ENCODE measurements at regions of chr15 and their contacts with region 1.

Region 1: DNA sequence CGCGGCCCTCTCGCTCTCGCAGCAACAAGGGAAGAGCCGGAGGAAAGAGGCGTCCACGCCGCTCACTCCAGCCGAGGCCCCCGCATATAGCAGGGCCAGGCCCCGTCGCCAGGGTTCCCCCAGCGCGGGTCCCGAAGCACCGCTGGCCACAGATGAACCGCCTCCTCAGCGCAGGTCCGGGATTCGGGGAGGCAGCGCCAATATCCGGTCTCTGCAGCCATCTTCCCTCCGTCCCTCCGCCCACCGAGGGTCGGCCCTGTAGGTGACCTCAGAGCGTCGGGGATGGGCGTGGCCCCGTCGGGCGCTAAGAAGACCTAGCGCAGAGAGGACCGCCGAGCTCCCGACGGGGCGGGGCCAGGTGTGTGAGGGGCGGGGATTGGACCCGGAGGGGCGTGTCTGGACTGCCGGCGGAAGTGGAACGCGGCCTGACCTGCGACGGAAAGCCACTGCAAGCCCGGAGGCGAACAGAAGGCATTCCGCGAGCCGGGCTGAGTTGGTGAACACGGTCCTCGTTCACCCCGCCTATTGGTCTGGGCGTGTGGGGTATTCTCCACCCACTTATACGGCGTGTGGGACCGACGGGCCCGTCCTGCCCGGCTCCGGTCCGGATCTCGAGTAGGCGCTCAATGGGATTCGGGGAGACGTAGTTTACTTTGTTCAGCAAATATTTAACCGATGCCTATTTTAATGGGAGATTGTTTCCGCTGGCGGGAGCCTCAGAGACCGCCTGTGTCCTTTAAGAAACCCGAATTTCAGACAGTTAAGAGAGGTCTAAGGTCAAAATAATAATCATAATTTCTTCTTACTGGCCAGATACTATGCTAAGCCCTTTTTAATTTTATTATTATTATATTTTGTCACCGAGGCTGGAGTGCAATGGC is 26.9 kb upstream of the MTHFS start:
- DNase-seq: peak; percentile 99
- ATAC-seq: peak; percentile 92
- H3K4me3 Mint-ChIP-seq: peak overlapping the region; percentile 93
- H3K27ac Mint-ChIP-seq: peak overlapping the region; percentile 99
- H3K4me1 Mint-ChIP-seq: peaks cover 23% of the 10 kb centered on the region
- H3K27me3 Mint-ChIP-seq: no peaks in the 10 kb centered on the region; the same call in 1 of the 2 replicates
- CTCF ChIP-seq: no peak

Region 2: GRCh38 chr15:79582650-79583049 is 341.1 kb before region 1 on chr15:
- CTCF ChIA-PET with region 1: no interaction called
- POLR2A ChIA-PET with region 1: no interaction called
- DNase-seq: no peak
- ATAC-seq: no peak
- H3K4me3 Mint-ChIP-seq: no peak overlapping the region
- H3K27ac Mint-ChIP-seq: no peak overlapping the region
- H3K4me1 Mint-ChIP-seq: no peaks in the 10 kb centered on the region
- H3K27me3 Mint-ChIP-seq: no peaks in the 10 kb centered on the region
- CTCF ChIP-seq: no peak

Region 3: DNA sequence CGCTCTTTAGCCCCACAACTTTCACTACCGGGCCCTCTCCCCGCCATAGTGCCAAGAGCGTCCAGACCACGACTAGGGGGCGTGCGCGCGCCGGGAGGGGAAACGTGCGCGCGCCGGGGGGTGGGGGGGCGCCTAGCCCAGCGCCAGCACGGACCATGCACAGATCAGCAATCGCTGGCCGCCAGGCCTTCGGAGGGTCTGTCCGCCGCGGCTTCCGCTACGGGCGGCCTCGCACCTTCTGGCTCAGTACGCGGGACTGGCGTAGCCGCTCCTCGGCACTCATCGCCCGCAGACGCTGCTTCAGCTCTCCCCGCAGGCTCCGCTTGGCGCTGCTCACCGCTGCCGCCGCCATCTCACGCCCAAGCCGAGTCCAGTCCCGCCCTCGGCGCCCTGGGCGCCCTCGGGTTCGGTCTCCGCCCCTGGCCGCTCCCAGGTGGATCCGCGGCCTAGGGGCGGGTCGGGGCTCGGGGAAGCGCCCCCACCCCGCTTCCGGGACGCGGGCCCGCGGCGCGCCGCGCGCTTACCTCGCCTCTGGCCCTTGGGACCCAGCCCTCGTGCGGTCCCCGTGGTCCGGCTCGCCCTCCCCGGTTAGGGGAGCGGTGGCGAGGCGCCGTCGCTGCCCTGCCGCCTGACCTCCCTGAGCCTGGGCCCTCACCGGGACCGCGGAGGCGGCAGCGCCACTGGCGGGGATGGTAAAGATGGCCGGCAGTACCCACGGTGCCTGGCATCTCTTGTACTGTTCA is 26.9 kb before region 1 on chr15 and contains the start of gene MTHFS:
- CTCF ChIA-PET with region 1: interaction called, 4 read pairs
- POLR2A ChIA-PET with region 1: interaction called, 16 read pairs
- DNase-seq: peak; percentile 82
- ATAC-seq: peak; percentile 93
- H3K4me3 Mint-ChIP-seq: peak within 1 kb of the TSS; percentile 96
- H3K27ac Mint-ChIP-seq: peak within 1 kb of the TSS; percentile 97
- H3K4me1 Mint-ChIP-seq: peaks cover 26% of the 10 kb centered on the region
- H3K27me3 Mint-ChIP-seq: no peaks in the 10 kb centered on the region
- CTCF ChIP-seq: no peak
- total RNA-seq, gene MTHFS: 24.8 to 31.0 TPM (median 29.7 TPM) in 3 replicates

Region 4: GRCh38 chr15:80036071-80036470 is 112.3 kb after region 1 on chr15:
- CTCF ChIA-PET with region 1: no interaction called
- POLR2A ChIA-PET with region 1: no interaction called
- DNase-seq: no peak
- ATAC-seq: no peak
- H3K4me3 Mint-ChIP-seq: no peak overlapping the region
- H3K27ac Mint-ChIP-seq: no peak overlapping the region
- H3K4me1 Mint-ChIP-seq: peaks cover 38% of the 10 kb centered on the region
- H3K27me3 Mint-ChIP-seq: no peaks in the 10 kb centered on the region
- CTCF ChIP-seq: no peak

Region 5: DNA sequence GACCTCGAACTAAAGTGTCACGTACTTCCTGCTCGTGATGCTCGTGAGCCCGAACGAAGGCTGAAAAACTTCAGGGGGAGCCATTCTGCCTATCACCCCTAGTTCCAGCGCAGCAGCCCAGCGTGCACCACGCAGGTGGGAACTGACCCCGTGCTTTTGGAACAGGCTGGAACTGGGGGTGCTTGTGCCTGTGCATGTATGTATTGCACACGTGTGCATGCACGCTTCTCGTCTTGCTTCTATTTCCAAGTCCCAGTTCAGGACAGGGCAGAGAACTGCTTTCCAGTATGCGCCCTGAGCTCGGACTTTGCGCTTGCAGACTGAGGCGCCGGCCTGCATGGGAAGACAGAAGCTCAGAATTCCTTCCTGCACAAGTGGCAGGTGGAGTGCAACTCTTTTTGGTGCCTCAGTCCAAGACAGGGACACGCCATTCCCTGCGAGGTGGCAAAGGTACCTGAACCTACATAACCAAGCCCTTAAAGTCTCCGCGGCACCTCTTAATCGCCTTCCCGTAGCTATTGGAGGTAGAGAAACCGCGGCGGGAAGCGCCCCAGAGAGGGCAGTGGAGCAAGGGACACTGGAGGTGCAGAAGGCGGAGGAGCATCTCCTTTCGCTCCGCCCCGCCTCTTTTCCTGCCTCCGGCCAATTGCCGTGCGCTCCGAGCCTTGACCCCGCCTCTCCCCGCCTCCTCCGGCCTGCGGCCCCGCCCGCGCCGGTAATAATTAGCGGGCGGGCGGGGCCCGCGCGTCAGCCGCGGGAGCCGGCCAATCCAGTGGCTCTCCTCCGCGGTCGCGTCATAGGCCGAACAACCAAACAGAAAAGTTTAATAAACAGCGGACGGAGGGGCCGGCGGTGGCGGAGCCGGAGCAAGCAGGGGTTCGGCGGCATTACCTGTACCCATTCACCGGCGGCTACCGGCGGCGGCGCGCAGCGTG is 135.4 kb after region 1 on chr15 and contains the start of gene ZFAND6:
- CTCF ChIA-PET with region 1: no interaction called
- POLR2A ChIA-PET with region 1: interaction called, 11 read pairs
- DNase-seq: peak; percentile 98
- ATAC-seq: peak; percentile 92
- H3K4me3 Mint-ChIP-seq: peak within 1 kb of the TSS; percentile 89
- H3K27ac Mint-ChIP-seq: peak within 1 kb of the TSS; percentile 99
- H3K4me1 Mint-ChIP-seq: peaks cover 39% of the 10 kb centered on the region
- H3K27me3 Mint-ChIP-seq: no peaks in the 10 kb centered on the region
- CTCF ChIP-seq: no peak
- total RNA-seq, gene ZFAND6: 108 to 119 TPM (median 114 TPM) in 3 replicates